GM18951 (cell line): ENCODE measurements at regions of chr3 and their contacts with region 1.

Region 1: DNA sequence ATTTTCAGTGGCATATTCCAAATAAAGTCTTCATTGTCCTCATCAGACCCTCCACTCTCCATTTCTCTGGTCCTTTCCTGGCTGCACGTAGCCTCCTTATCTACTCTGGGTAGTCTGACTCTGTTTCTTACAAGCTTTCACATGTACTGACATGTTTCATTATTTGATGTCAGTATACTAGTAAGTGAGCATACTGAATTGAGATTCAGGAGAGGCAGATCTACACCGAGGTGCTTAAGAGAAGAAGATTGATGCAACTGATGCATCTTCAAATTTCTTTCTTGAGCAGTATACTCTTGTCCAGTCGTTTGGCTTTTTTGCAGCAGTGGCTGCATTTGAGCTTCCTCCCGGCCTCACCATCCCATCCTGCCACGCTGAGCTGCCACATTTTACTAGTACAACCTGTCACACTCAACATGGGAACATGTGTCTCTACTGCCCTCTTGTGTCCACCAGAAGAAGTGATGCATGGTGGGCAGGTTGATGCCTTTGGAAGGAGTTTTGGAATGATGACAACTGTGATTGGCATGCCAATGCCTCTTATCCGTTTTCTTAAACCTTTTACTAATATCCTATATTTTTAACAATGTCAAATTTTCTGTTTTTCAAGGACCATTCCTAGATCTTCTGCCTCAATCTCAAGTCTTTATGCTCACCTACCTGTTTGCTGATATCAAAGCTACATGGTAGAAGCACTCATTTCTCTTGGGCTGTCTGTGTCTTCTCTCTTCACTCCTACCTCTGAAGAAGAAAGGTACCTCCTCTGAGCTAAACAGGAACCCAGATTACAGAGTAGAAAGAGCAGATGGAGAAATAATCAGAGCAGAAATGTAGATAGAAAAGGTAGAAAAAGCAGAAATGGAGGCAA is 38.7 kb downstream of the GUCA1C start:
- POLR2A ChIP-seq: no peak

Region 2: DNA sequence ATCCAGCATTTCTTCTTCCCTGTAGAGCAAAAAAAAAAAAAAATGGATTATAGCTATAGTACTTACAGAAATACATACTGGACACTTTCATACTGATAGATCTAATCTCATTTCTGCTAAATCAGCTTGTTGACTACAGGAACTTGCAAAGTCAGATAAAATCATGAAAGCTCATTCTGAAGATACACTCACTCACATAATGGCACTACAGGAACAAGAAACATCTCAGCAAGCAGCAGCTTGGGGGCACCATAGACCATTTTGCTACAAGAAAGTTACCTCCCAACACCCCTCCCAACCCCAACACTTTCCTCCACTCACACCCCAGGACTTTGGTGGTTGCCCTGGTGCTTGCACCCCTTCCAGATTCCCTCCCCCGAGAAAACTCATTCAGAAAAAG is 409.2 kb before region 1 on chr3:
- in situ Hi-C with region 1: loop called (anchors 10 kb)
- POLR2A ChIP-seq: no peak

Region 3: GRCh38 chr3:108662130-108662738 is 252.8 kb before region 1 on chr3:
- in situ Hi-C with region 1: loop called (anchors 10 kb)
- POLR2A ChIP-seq: no peak

Region 4: DNA sequence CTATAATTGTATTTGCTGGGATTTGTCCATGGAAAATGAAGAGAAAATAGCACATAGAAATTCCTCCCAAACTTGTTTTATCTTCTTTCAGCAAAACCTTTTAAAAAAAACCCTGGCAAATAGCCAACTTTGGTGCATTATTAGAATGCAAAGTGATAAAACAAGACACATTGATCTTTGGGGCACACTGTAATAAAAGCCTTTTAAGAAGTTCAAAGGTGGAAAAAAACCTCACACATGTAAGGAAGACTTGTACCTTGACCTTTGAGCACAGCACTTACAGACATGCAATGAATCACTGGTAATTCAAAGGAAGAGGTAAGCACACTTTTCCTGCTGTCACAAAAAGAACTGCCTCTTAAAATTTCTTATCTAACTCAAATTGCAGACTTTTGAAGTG is 210.9 kb after region 1 on chr3:
- in situ Hi-C with region 1: no loop called
- POLR2A ChIP-seq: no peak

Region 5: DNA sequence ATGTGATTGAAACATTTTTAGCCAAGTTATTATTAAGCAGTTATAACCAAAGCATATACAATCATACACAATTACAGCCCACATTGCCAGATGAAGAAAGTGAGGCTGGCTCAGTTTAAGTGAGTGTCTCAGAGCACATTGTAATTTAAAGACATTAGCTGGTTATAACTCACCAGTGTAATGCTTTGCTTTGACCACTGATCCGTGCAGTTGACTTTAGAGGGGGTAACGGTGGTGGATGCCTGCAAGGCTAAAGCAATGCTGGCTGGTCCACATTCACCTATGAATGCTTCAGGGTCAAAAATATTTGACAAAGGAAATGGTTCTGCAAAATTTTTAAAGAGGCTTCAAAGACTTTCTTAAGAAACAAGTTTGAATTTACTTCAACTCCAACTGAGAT is 222.8 kb after region 1 on chr3:
- in situ Hi-C with region 1: no loop called
- POLR2A ChIP-seq: no peak